CD4-positive, alpha-beta memory T cell (primary cell): ENCODE measurements at regions of chr9 and their contacts with region 1.

Region 1: DNA sequence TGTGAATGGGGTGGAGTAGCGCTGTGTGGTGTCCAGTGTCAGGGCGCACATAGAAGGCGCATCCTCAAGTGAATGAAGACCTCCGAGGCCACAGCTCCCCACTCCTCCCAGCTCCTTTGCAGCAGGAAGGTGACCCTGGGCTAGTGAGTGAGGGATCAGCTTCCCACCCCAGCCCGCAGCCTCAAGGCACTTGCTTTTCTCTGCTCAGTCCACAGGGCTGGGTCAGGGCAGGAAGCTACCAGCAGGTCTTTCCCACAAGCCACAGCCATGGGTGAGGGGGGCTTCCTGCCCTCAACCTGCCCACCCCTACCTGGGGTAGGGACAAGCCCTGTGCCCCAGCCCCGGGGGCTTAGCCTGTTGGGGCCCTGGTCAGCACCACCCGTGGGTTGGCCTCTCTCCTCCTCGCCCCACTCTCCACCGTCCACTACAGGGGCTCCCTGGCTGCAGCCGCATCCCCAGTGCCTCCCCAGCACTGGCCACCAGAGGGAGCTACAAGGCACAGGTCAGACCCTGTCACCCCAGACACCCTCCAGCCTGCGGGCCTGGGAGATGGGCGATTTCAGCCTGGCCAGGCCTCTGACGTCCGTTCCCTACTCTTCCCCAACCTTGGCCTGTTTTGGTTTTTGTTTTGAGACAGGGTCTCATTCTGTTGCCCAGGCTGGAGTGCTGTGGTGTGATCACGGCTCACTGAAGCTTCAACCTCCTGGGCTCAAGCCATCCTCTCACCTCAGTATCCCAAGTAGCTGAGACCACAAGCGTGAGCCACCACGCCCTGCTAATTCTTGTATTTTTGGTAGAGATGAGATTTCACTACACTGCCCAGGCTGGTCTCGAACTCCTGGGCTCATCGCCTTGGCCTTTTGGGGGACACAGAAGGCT is 1.3 kb upstream of the ABCA2 start:
- DNase-seq: peak; percentile 58 to 74 (median 64)
- H3K4me3 ChIP-seq: peak overlapping the region; percentile 65 to 75
- H3K4me3 Mint-ChIP-seq: peak overlapping the region; percentile 87 to 96 (median 90)
- H3K27ac ChIP-seq: peak overlapping the region; percentile 68
- H3K27ac Mint-ChIP-seq: peak overlapping the region; percentile 70 to 92 (median 85)
- H3K4me1 ChIP-seq: peaks cover 80% of the 10 kb centered on the region
- H3K4me1 Mint-ChIP-seq: peaks cover 20 to 58% (median 39%) of the 10 kb centered on the region in 4 donors
- H3K27me3 ChIP-seq: no peaks in the 10 kb centered on the region
- H3K27me3 Mint-ChIP-seq: no peaks in the 10 kb centered on the region

Region 2: GRCh38 chr9:136777359-136777758 is 251.9 kb before region 1 on chr9:
- CTCF ChIA-PET with region 1: interaction called, 11 read pairs
- POLR2A ChIA-PET with region 1: interaction called, 3 read pairs
- intact Hi-C with region 1: no loop called
- DNase-seq: no peak
- H3K4me3 ChIP-seq: no peak overlapping the region
- H3K4me3 Mint-ChIP-seq: no peak overlapping the region
- H3K27ac ChIP-seq: no peak overlapping the region
- H3K27ac Mint-ChIP-seq: no peak overlapping the region
- H3K4me1 ChIP-seq: no peaks in the 10 kb centered on the region
- H3K4me1 Mint-ChIP-seq: peaks cover 0 to 5% (median 0%) of the 10 kb centered on the region in 4 donors
- H3K27me3 ChIP-seq: no peaks in the 10 kb centered on the region
- H3K27me3 Mint-ChIP-seq: peaks cover 10 to 14% of the 10 kb centered on the region in 2 donors

Region 3: GRCh38 chr9:136807281-136808074 is 221.8 kb before region 1 on chr9 and contains the start of gene RABL6:
- CTCF ChIA-PET with region 1: interaction called, 8 read pairs
- POLR2A ChIA-PET with region 1: interaction called, 17 read pairs
- intact Hi-C with region 1: no loop called
- DNase-seq: peak; percentile 78 to 90 (median 86)
- H3K4me3 ChIP-seq: peak within 1 kb of the TSS; percentile 61 to 74
- H3K4me3 Mint-ChIP-seq: peak within 1 kb of the TSS; percentile 87 to 93 (median 90)
- H3K27ac ChIP-seq: peak within 1 kb of the TSS; percentile 83
- H3K27ac Mint-ChIP-seq: peak within 1 kb of the TSS; percentile 91 to 96 (median 94)
- H3K4me1 ChIP-seq: peaks cover 40% of the 10 kb centered on the region
- H3K4me1 Mint-ChIP-seq: peaks cover 11 to 45% (median 30%) of the 10 kb centered on the region in 4 donors
- H3K27me3 ChIP-seq: no peaks in the 10 kb centered on the region
- H3K27me3 Mint-ChIP-seq: no peaks in the 10 kb centered on the region
- total RNA-seq, gene RABL6: 65.1 to 70.9 TPM

Region 4: DNA sequence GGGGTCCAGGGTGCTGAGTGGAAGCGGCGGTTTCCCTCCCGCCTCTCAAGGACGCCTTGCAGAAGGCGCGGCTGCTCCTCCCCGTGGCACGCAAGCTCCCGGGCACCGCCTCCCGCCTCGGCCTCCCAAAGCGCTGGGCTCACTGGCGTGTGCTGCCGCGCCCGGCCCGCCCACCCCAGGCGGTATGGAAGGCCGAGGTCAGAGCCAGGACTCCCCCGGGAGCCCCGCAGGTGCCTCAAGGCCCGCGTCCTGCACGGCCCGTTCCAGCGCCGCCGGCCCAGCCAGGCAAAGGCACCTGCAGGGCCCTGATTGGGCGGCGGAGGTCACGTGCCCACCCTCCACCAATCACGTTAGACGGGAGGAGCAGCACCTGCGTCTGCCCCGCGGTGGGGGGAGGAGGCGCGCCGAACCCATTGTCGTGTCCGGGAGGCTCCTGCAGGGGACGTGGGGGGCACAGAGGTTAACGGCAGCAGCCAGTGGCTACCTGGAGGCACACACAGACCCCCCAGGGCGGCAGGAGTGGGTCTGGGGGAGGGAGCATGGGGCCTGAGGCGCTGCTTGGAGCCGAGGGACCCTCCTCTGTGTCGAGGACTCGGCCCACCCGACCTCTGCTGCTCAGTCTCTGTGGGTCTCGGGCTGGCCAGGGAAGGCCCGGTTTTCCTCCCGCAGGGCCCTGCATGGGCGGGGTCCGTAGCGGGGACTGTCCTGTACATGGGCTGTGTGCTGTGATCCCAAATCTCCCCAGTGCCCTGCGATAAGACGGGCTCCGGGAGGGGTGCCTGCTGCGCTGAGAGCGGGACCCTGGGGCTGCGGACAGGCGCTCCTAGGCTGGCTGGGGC is 79.3 kb before region 1 on chr9:
- CTCF ChIA-PET with region 1: interaction called, 84 read pairs
- POLR2A ChIA-PET with region 1: interaction called, 25 read pairs
- intact Hi-C with region 1: loop called (anchors 1 kb)
- DNase-seq: peak; percentile 93 to 97 (median 95)
- H3K4me3 ChIP-seq: peak overlapping the region; percentile 29 to 57
- H3K4me3 Mint-ChIP-seq: peak overlapping the region; percentile 79 to 90 (median 86)
- H3K27ac ChIP-seq: peak overlapping the region; percentile 82
- H3K27ac Mint-ChIP-seq: peak overlapping the region; percentile 72 to 91 (median 89)
- H3K4me1 ChIP-seq: peaks cover 16% of the 10 kb centered on the region
- H3K4me1 Mint-ChIP-seq: peaks cover 3 to 16% (median 8%) of the 10 kb centered on the region in 4 donors
- H3K27me3 ChIP-seq: no peaks in the 10 kb centered on the region
- H3K27me3 Mint-ChIP-seq: no peaks in the 10 kb centered on the region

Region 5: DNA sequence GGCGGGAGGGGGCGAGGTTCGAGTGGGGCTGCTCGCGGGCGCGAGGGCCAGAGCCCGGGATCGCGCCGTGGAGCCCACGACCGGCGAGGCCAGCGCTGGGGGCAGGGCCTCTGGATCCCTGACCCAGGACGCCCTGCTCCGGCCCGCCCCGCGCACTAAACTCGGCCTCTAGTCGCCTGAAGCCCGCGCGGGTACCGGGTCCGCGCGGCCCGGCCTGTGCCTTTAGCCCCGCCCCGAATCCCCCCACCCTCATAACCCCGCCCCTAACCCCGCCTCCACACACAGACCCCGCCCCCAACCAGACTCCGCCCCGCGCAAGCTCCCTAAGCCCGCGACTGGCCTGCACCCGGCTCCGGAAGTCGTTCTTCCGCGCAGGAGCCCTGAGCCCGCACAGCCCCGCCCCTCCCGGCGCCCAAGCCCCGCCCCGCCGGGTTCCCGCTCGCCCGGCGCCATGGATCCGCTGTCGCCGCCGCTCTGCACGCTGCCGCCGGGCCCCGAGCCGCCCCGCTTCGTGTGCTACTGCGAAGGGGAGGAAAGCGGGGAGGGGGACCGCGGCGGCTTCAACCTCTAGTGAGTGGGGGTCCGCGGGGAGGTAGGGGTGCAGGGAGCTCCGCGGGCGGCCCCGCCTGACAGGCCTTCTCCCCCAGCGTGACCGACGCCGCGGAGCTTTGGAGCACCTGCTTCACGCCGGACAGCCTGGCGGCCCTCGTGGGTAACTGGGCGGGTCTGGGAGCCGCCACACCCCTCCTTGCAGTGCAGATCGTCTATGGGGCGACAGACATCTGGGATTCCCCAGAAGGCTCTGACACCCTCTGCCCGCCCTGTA is 37.1 kb before region 1 on chr9 and contains the start of gene PAXX:
- CTCF ChIA-PET with region 1: interaction called, 21 read pairs
- POLR2A ChIA-PET with region 1: interaction called, 52 read pairs
- intact Hi-C with region 1: loop called (anchors 2 kb)
- DNase-seq: peak; percentile 92 to 93 (median 93)
- H3K4me3 ChIP-seq: peak within 1 kb of the TSS; percentile 86 to 90
- H3K4me3 Mint-ChIP-seq: peak within 1 kb of the TSS; percentile 84 to 92 (median 88)
- H3K27ac ChIP-seq: peak within 1 kb of the TSS; percentile 85
- H3K27ac Mint-ChIP-seq: peak within 1 kb of the TSS; percentile 83 to 94 (median 88)
- H3K4me1 ChIP-seq: peaks cover 41% of the 10 kb centered on the region
- H3K4me1 Mint-ChIP-seq: peaks cover 4 to 41% (median 20%) of the 10 kb centered on the region in 4 donors
- H3K27me3 ChIP-seq: no peaks in the 10 kb centered on the region
- H3K27me3 Mint-ChIP-seq: peaks cover 0 to 5% of the 10 kb centered on the region in 2 donors
- total RNA-seq, gene PAXX: 94.2 to 101 TPM

Region 6: GRCh38 chr9:137055385-137056364 is 26.4 kb after region 1 on chr9:
- CTCF ChIA-PET with region 1: interaction called, 10 read pairs
- POLR2A ChIA-PET with region 1: no interaction called
- intact Hi-C with region 1: no loop called
- DNase-seq: peak in 1 of 5 donors; percentile 28
- H3K4me3 ChIP-seq: no peak overlapping the region
- H3K4me3 Mint-ChIP-seq: no peak overlapping the region
- H3K27ac ChIP-seq: no peak overlapping the region
- H3K27ac Mint-ChIP-seq: no peak overlapping the region
- H3K4me1 ChIP-seq: peaks cover 11% of the 10 kb centered on the region
- H3K4me1 Mint-ChIP-seq: no peaks in the 10 kb centered on the region
- H3K27me3 ChIP-seq: peaks cover 20% of the 10 kb centered on the region
- H3K27me3 Mint-ChIP-seq: peaks cover 1 to 2% of the 10 kb centered on the region in 2 donors

Region 7: GRCh38 chr9:137070201-137070905 is 41.1 kb after region 1 on chr9 and contains the start of gene SAPCD2:
- CTCF ChIA-PET with region 1: interaction called, 30 read pairs
- POLR2A ChIA-PET with region 1: interaction called, 8 read pairs
- intact Hi-C with region 1: loop called (anchors 1 kb)
- DNase-seq: peak; percentile 86 to 91 (median 87)
- H3K4me3 ChIP-seq: peak within 1 kb of the TSS in 1 of 2 donors; percentile 57
- H3K4me3 Mint-ChIP-seq: peak within 1 kb of the TSS; percentile 59 to 86 (median 75)
- H3K27ac ChIP-seq: no peak within 1 kb of the TSS
- H3K27ac Mint-ChIP-seq: peak within 1 kb of the TSS in 5 of 7 donors; percentile 47 to 91 (median 82)
- H3K4me1 ChIP-seq: peaks cover 21% of the 10 kb centered on the region
- H3K4me1 Mint-ChIP-seq: peaks cover 4 to 17% (median 11%) of the 10 kb centered on the region in 4 donors
- H3K27me3 ChIP-seq: no peaks in the 10 kb centered on the region
- H3K27me3 Mint-ChIP-seq: peaks cover 0 to 4% of the 10 kb centered on the region in 2 donors
- total RNA-seq, gene SAPCD2: 0.09 to 0.11 TPM